Activated CD8-positive, alpha-beta memory T cell treated with anti-CD3 and anti-CD28 coated beads, Interleukin-2, amount 10 ng/mL, durations not matched to agents 7 days and 5 days (primary cell): ENCODE measurements at regions of chr2 and their contacts with region 1.

Region 1: DNA sequence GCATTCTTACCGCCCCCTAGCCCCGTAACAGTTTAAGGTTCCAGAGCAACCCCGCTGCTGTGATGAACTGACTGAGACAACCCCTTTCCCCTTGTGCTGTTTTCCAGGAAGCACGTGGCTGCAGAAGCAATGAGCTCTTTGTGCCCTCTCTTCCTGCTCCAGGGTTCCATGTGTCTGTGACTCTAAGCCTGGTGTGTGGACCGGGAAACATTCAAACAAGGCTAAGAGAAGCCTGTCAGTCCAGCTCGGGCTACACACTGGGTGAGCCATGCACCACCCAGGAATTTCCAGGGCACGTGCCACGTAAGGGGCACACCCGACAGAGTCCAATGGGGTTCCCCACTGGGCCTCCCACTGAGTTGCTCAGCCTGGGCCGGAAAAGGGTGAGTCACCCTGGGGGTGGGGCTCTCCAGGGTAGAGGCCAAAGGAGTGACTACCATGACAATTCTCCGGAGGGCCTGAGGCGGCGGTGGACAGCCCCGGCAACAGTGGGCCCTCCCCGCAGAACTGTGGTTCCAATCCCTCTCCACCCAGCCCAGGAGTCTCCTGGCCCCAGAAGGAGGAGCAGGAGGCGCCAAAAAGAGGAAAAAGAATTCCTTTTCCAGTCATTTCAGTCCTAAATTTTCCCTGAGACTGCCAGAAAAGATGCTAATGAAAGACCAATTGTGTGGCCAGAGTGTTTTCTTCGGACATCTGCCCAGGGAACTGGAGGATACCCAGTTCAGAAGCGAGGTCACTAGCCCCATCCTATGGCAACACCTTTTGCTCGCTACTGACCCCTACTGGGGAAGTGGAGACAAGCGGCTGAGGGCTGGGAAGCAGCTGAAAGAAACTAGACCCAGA is 157.8 kb upstream of the SLC1A4 start:
- DNase-seq: peak; percentile 91
- ATAC-seq: peak; percentile 97
- H3K4me3 Mint-ChIP-seq: peak overlapping the region; percentile 52
- H3K27ac Mint-ChIP-seq: peak overlapping the region; percentile 83
- H3K4me1 Mint-ChIP-seq: peaks cover 21% of the 10 kb centered on the region
- H3K27me3 Mint-ChIP-seq: peaks cover 10% of the 10 kb centered on the region

Region 2: DNA sequence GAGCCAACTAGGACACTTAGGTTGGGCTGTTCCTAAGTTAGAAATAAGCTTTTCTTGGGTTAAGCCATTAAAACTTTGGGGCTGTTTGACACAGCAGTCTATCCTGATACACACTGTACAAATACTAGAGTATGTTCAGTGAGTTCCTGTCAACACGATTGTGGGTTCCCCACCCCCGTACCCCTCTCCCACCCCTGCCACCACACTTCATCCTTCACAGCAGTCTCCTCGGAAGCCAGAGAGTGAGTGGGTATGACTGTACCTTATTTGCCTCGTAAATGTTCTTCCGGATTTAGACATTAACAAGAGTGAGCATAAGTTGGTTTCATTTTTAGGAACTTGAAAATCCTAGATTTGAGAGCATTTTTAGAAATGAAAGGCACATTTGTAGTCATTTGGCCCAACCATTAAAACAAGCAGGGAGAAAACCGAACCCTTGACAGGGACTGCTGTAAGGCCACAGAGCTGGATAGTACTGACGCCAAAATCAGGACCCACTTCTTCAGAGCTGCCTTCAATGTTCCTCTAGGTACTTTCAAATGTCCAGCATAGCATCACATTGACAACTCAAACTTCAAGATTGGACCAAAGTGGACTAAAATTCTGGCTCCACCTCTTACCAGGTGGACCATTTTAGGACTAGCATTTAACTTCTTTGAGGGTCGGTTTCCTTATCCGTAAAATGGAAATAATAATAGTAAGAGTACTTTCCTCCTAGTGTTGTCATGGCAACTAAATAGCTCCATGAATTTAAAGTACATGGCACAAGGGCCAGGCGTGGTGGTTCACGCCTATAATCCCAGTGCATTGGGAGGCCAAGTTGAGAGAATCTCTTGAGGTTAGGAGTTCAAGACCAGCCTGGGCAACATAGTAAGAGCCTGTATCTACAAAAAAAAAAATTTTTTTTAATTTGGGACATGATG is 11.3 kb before region 1 on chr2:
- CTCF ChIA-PET with region 1: interaction called, 24 read pairs
- DNase-seq: peak; percentile 78
- ATAC-seq: peak; percentile 97
- H3K4me3 Mint-ChIP-seq: peak overlapping the region; percentile 62
- H3K27ac Mint-ChIP-seq: peak overlapping the region; percentile 94
- H3K4me1 Mint-ChIP-seq: peaks cover 27% of the 10 kb centered on the region
- H3K27me3 Mint-ChIP-seq: no peaks in the 10 kb centered on the region

Region 3: DNA sequence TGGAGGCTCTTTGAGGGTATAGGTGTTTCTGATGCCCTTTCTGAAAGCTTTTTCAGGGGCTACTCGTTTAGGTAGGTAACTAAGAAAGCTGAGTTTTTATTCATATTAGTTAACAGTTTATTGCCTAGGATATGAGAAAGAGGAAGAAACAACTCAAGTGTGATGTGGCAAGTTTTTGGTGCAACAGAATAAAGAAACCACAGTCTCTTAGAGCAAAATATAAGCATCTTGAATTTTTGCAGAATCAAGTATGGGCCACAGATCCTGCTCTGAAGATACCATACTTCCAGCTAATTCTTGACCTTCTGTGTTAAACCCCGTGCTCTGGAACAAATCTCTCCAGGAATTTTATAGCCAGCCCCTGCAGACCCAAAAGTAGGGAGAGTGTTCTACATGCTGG is 10.1 kb after region 1 on chr2:
- CTCF ChIA-PET with region 1: interaction called, 12 read pairs
- DNase-seq: no peak
- ATAC-seq: no peak
- H3K4me3 Mint-ChIP-seq: no peak overlapping the region
- H3K27ac Mint-ChIP-seq: no peak overlapping the region
- H3K4me1 Mint-ChIP-seq: peaks cover 4% of the 10 kb centered on the region
- H3K27me3 Mint-ChIP-seq: no peaks in the 10 kb centered on the region